ENCODE measurements at regions of chr18 and their contacts with region 1.

Region 1: GRCh38 chr18:60809937-60810336 is 437.4 kb upstream of the MC4R start:
- DNase-seq: no peak

Region 2: DNA sequence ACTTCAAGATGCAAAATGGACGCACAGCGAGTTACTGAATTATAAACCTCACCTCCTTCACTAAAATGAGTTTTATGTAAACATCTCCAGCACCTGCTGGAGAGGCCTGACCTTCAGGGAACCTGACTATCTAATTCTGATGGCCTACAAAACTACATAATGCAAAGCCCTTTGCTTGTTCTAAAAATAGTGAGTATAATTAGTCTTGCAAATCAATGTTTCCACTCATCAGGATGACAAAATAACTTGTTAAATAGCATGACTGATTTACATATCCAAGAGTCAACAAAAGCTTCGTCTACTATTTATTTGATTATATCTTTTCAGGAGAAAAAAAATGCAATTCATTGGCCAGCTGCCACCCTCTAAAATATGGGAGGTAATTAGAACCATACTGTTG is 111.0 kb before region 1 on chr18:
- intact Hi-C with region 1: loop called in 1 of 2 experiments (anchors 5 kb)
- DNase-seq: no peak

Region 3: GRCh38 chr18:61064911-61065310 is 255.0 kb after region 1 on chr18:
- intact Hi-C with region 1: no loop called
- DNase-seq: no peak